PC-3 (cell line): ENCODE measurements at regions of chr5 and their contacts with region 1.

Region 1: DNA sequence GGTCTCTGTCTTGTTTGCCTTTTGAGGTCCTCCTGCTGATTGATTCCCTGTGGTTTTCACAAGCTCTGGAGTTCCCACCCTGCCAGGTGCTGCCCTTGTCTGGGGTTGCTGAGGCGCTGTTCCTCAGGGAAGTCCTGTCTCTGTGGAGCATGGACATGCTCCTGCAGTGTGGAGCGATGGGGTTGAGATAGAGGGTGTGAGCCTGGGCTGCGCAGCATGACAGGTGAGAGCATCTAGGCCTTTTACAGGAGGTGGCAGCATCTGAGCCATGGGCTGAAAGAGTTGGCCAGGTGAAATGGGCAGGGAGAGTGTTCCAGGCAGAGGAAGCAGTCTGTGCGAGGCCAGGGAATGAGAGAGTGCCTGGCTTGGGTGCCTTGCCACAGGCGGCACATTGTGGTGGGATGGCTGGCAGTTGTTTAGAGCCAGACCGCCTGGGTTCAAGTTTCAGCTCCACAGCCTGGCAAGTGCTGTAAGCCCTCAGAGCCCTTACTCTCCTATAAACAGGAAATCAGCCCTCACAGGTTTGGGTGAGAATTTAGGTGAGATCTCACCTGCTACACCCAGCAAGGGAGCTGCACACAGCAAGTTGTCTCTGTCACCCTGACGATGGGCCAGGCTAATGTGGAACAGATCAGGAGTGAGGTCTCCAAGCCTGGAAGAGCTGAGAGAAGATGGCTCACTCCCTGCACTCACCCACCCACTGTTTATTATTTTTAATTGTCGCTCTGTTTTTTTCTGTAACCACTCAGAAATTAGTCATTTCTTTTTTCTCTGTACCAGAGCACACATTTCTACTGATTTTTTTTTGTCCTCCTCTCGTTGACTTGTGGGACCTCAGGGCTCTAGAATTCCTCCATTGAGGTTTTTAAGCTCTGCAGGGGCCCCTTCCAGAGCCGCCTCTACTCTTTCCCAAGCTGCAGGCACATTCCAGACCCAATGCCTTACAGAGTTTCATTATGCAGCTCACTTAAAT is 19.6 kb downstream of the TCOF1 start:
- DNase-seq: no peak
- ATAC-seq: no peak
- H3K4me3 ChIP-seq: no peak overlapping the region
- H3K27ac ChIP-seq: no peak overlapping the region
- H3K4me1 ChIP-seq: no peaks in the 10 kb centered on the region
- H3K27me3 ChIP-seq: no peaks in the 10 kb centered on the region
- CTCF ChIP-seq: no peak

Region 2: DNA sequence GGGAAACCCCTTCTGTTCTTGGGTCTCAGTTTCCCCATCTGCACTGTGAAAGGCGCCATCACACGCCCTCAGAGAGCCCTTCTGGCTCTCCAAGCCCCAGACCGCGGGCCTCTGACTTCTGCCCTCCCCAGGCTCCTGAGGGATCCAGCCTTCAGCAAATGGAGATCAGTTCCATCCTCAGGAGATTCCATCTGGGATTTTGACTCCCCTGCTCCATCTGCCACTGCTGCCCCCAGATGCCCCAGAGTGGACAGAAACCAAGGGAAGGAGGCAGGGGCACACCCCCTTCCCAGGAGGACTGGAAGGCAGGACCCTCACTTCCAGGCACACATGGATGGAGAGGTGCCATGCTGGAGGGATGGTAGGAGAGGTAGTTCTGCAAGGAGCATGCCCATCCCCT is 91.1 kb after region 1 on chr5:
- CTCF ChIA-PET with region 1: no interaction called
- POLR2A ChIA-PET with region 1: interaction called, 16 read pairs
- intact Hi-C with region 1: no loop called
- DNase-seq: no peak
- ATAC-seq: no peak
- H3K4me3 ChIP-seq: no peak overlapping the region
- H3K27ac ChIP-seq: no peak overlapping the region
- H3K4me1 ChIP-seq: peaks cover 17% of the 10 kb centered on the region
- H3K27me3 ChIP-seq: no peaks in the 10 kb centered on the region
- CTCF ChIP-seq: no peak